ENCODE measurements at regions of chr12 and their contacts with region 1.

Region 1: DNA sequence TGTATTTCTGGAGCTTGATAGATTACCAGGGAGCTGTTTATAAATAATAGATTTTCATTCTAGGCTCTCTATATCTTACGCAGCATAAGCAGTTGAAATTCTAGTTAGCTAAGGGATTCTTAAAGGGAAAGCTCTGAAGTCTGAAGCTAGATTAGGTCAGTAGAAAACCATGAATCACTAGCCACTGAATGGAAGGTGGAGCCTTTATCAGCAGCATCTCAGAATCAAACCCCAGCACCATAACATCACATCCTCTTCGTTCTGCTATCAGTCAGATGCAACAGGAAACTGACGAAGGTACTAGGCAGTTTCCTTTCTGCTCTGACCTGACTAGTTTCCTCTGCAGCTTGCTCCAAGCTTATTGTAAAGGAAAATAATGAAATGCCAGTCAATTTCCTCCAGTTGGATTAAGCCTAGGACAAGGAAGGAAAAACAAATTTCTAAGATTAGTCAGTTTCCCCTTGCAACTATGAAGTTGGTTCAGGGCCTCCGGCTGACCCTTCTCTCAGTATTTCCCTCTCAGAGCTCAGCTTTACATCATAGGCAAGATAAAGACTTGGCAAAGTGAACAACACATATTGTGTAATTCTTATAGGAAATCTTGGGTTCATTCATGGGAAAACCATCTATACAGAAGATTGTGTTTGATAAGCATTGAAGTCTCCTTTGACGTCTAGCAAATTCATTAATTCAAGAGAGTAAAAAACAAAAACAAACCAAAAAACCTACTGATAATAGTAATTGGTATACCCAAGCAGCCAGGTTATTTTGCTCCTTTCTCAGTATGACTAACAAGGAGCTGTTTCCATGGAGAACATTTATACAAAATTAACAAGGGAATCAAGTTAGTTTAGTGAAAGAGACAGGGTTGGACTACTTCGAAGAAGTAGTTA is 43.4 kb upstream of the CFAP54 start:
- DNase-seq: peak; percentile 72
- H3K4me3 Mint-ChIP-seq: peak overlapping the region; percentile 26
- H3K27ac Mint-ChIP-seq: peak overlapping the region; percentile 94
- H3K4me1 Mint-ChIP-seq: peaks cover 50% of the 10 kb centered on the region
- H3K27me3 Mint-ChIP-seq: no peaks in the 10 kb centered on the region

Region 2: GRCh38 chr12:95918194-95918993 is 527.5 kb before region 1 on chr12:
- intact Hi-C with region 1: no loop called
- DNase-seq: peak; percentile 34
- H3K4me3 Mint-ChIP-seq: no peak overlapping the region
- H3K27ac Mint-ChIP-seq: no peak overlapping the region
- H3K4me1 Mint-ChIP-seq: no peaks in the 10 kb centered on the region
- H3K27me3 Mint-ChIP-seq: peaks cover 18% of the 10 kb centered on the region

Region 3: DNA sequence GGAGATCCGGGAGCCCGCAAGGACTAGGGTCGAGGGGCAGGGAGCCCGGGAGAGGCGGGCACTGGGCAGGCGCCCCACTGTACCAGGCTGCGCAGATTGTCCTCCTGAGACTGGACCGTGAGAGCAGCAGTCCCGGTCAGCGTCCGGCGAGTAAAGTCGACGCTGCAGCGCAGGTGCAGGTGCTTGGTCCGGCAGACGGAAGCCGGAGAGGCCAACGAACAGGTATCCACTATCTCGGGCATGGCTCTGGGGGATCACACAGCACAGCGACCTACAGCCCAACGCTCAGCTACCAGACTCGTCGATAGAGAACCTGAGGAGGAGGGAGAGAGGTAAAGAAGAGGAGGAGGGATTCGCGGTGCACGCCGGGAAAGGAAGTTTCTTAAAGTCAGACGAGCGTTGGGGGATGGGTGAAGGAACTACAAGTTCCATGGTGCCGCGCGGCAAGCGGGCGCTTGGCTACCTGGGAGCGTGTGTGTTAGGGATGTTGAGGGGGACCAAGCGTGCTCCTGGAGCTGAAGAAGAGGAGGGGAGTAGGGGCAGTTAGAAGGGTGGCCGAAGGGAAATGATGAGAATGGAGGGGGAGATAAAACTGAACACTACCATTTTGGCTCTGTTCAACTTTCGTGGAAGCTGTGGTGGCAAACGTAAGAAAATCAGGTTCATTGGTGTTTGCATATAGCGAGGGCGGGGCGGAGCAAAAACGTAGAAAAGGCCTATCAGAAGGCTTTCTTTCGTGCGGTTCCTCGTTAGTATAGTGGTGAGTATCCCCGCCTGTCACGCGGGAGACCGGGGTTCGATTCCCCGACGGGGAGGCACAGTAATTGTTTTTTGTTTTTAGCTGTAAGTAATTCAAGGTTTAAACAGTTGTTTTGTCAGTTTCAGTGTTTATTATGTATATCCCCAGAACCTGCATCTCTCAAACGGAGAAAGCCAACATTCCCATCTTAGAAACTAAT is 410.4 kb before region 1 on chr12 and contains the start of gene LTA4H:
- intact Hi-C with region 1: loop called (anchors 5 kb)
- DNase-seq: peak; percentile 94
- H3K4me3 Mint-ChIP-seq: no peak within 1 kb of the TSS
- H3K27ac Mint-ChIP-seq: no peak within 1 kb of the TSS
- H3K4me1 Mint-ChIP-seq: peaks cover 8% of the 10 kb centered on the region
- H3K27me3 Mint-ChIP-seq: no peaks in the 10 kb centered on the region
- total RNA-seq, gene LTA4H: 63.6 and 65.2 TPM in 2 replicates

Region 4: GRCh38 chr12:96427269-96427729 is 18.6 kb before region 1 on chr12:
- intact Hi-C with region 1: loop called (anchors 1 kb)
- DNase-seq: no peak
- H3K4me3 Mint-ChIP-seq: peak overlapping the region; percentile 58
- H3K27ac Mint-ChIP-seq: peak overlapping the region; percentile 88
- H3K4me1 Mint-ChIP-seq: peaks cover 52% of the 10 kb centered on the region
- H3K27me3 Mint-ChIP-seq: no peaks in the 10 kb centered on the region

Region 5: DNA sequence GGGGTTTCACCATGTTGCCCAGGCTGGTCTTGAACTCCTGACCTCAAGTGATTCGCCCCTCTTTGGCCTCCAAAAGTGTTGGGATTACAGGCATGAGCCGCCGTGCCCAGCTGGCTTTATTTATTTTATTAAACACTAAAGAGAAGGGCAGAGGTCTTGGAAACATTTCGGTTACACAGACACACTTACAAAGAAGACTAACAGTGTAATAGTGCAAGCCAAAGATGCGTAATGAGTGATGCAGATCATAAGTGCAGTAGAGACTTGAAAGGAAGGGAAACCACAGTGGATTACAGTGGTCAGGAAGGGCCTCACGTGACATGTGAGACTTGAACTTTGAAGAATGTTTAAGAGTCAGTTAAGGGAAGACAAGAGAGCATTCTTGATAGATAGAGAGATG is 11.8 kb before region 1 on chr12:
- intact Hi-C with region 1: loop called (anchors 1 kb)
- DNase-seq: peak; percentile 71
- H3K4me3 Mint-ChIP-seq: peak overlapping the region; percentile 10
- H3K27ac Mint-ChIP-seq: peak overlapping the region; percentile 64
- H3K4me1 Mint-ChIP-seq: peaks cover 40% of the 10 kb centered on the region
- H3K27me3 Mint-ChIP-seq: no peaks in the 10 kb centered on the region

Region 6: GRCh38 chr12:96489103-96490056 is 43.4 kb after region 1 on chr12 and contains the start of gene CFAP54:
- intact Hi-C with region 1: loop called (anchors 1 kb)
- DNase-seq: peak; percentile 92
- H3K4me3 Mint-ChIP-seq: peak within 1 kb of the TSS; percentile 84
- H3K27ac Mint-ChIP-seq: peak within 1 kb of the TSS; percentile 48
- H3K4me1 Mint-ChIP-seq: peaks cover 31% of the 10 kb centered on the region
- H3K27me3 Mint-ChIP-seq: peaks cover 25% of the 10 kb centered on the region
- total RNA-seq, gene CFAP54: 0.14 and 0.23 TPM in 2 replicates

Region 7: GRCh38 chr12:96501139-96501761 is 55.3 kb after region 1 on chr12:
- intact Hi-C with region 1: loop called (anchors 1 kb)
- DNase-seq: no peak
- H3K4me3 Mint-ChIP-seq: no peak overlapping the region
- H3K27ac Mint-ChIP-seq: peak overlapping the region; percentile 74
- H3K4me1 Mint-ChIP-seq: peaks cover 48% of the 10 kb centered on the region
- H3K27me3 Mint-ChIP-seq: no peaks in the 10 kb centered on the region

Region 8: DNA sequence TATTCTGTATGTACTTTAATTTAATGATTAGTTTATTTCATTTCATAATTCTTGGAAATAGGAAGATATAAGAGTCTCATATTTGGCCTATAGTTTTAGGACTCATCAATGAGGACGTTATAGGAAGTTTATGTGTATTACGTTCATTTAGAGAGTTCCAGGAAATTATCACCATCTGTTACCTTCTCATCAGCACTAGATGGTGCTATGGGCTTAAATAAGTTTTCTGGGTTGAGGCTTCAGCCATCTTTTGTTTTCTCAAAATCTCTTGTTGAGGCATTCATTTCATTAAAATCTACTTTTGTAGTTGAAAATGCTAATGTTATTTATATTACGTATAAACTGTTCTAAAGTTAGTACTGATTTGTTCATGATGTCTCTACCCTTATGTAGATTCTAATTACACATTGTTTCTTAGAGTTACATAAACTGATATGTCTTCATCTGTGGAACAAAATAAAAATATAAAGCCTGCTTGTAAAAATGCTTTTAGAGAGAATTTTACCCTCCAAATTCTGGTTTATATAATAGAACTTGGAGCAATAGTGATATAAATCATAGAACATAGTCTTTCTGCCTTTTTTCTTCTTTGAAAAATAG is 132.7 kb after region 1 on chr12:
- intact Hi-C with region 1: loop called (anchors 10 kb)
- DNase-seq: no peak
- H3K4me3 Mint-ChIP-seq: no peak overlapping the region
- H3K27ac Mint-ChIP-seq: no peak overlapping the region
- H3K4me1 Mint-ChIP-seq: peaks cover 2% of the 10 kb centered on the region
- H3K27me3 Mint-ChIP-seq: peaks cover 14% of the 10 kb centered on the region